B cell (primary cell): ENCODE measurements at regions of chr5 and their contacts with region 1.

Region 1: GRCh38 chr5:176660860-176661641 is 13.8 kb downstream of the TSPAN17 start:
- DNase-seq: peak; percentile 89
- ATAC-seq: peak; percentile 76
- H3K4me3 ChIP-seq: no peak overlapping the region
- H3K4me3 Mint-ChIP-seq: no peak overlapping the region
- H3K27ac ChIP-seq: no peak overlapping the region
- H3K27ac Mint-ChIP-seq: peak overlapping the region; percentile 67
- H3K4me1 ChIP-seq: peaks cover 25 to 30% of the 10 kb centered on the region in 2 donors
- H3K4me1 Mint-ChIP-seq: peaks cover 32% of the 10 kb centered on the region
- H3K27me3 ChIP-seq: peaks cover 0 to 16% (median 2%) of the 10 kb centered on the region in 4 experiments
- H3K27me3 Mint-ChIP-seq: peaks cover 23% of the 10 kb centered on the region
- CTCF ChIP-seq: peak; percentile 96

Region 2: DNA sequence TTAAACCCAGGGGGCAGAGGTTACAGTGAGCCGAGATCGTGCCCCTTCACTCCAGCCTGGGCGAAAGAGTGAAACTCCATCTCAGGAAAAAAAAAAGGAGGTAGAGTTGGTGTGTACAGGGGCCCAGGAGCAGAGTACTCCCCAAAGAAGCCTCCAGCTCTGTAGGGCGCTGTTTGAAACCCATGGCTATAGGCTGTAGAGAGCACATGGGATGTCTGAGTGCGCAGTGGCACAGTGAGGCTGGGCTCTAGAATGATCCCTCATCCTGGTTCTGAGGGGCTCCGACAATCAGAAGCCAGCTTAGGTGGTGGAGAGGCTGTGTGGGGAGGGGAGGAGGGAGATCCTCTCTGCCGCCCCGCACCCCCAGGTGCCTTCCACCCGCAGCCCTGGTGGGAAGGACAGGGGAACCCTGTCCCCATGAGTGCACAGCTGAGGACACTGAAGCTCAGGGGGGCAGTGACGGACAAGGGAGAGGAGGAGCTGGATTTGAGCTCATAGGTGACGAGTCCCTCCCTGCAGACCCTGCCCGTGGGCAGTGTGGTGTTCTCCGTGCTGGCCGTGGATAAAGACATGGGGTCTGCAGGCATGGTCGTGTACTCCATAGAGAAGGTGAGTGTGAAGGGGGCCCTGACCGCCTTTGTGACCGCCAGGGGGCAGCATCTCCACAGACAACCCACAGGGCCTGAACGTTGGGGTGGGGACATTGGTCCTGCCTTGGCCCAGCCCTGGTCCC is 87.3 kb before region 1 on chr5:
- CTCF ChIA-PET with region 1: interaction called, 21 read pairs
- POLR2A ChIA-PET with region 1: no interaction called
- intact Hi-C with region 1: loop called (anchors 1 kb)
- DNase-seq: peak; percentile 82
- ATAC-seq: peak; percentile 79
- H3K4me3 ChIP-seq: no peak overlapping the region
- H3K4me3 Mint-ChIP-seq: no peak overlapping the region
- H3K27ac ChIP-seq: no peak overlapping the region
- H3K27ac Mint-ChIP-seq: no peak overlapping the region
- H3K4me1 ChIP-seq: peaks cover 0 to 11% of the 10 kb centered on the region in 2 donors
- H3K4me1 Mint-ChIP-seq: peaks cover 5% of the 10 kb centered on the region
- H3K27me3 ChIP-seq: peaks cover 0 to 7% (median 2%) of the 10 kb centered on the region in 4 experiments
- H3K27me3 Mint-ChIP-seq: peaks cover 12% of the 10 kb centered on the region
- CTCF ChIP-seq: peak; percentile 92

Region 3: GRCh38 chr5:176596689-176597416 is 64.2 kb before region 1 on chr5:
- CTCF ChIA-PET with region 1: interaction called, 10 read pairs
- POLR2A ChIA-PET with region 1: no interaction called
- intact Hi-C with region 1: no loop called
- DNase-seq: peak; percentile 77
- ATAC-seq: peak; percentile 85
- H3K4me3 ChIP-seq: peak overlapping the region in 3 of 5 experiments; percentile 20 to 42 (median 39)
- H3K4me3 Mint-ChIP-seq: peak overlapping the region; percentile 75
- H3K27ac ChIP-seq: no peak overlapping the region
- H3K27ac Mint-ChIP-seq: no peak overlapping the region
- H3K4me1 ChIP-seq: peaks cover 0 to 10% of the 10 kb centered on the region in 2 donors
- H3K4me1 Mint-ChIP-seq: peaks cover 7% of the 10 kb centered on the region
- H3K27me3 ChIP-seq: peaks cover 0 to 14% (median 3%) of the 10 kb centered on the region in 4 experiments
- H3K27me3 Mint-ChIP-seq: no peaks in the 10 kb centered on the region
- CTCF ChIP-seq: peak; percentile 18

Region 4: GRCh38 chr5:176629853-176630712 is 31.0 kb before region 1 on chr5 and contains the starts of genes EIF4E1B and SNCB:
- CTCF ChIA-PET with region 1: interaction called, 21 read pairs
- POLR2A ChIA-PET with region 1: no interaction called
- intact Hi-C with region 1: no loop called
- DNase-seq: peak; percentile 80
- ATAC-seq: peak; percentile 93
- H3K4me3 ChIP-seq: peak within 1 kb of the TSS; percentile 28 to 69 (median 51)
- H3K4me3 Mint-ChIP-seq: peak within 1 kb of the TSS; percentile 86
- H3K27ac ChIP-seq: no peak within 1 kb of the TSS
- H3K27ac Mint-ChIP-seq: peak within 1 kb of the TSS; percentile 16
- H3K4me1 ChIP-seq: peaks cover 55 to 65% of the 10 kb centered on the region in 2 donors
- H3K4me1 Mint-ChIP-seq: peaks cover 61% of the 10 kb centered on the region
- H3K27me3 ChIP-seq: peaks cover 0 to 39% (median 21%) of the 10 kb centered on the region in 4 experiments
- H3K27me3 Mint-ChIP-seq: peaks cover 34% of the 10 kb centered on the region
- CTCF ChIP-seq: no peak
- total RNA-seq, gene EIF4E1B: not detected in 2 replicates
- total RNA-seq, gene SNCB: not detected in 2 replicates

Region 5: DNA sequence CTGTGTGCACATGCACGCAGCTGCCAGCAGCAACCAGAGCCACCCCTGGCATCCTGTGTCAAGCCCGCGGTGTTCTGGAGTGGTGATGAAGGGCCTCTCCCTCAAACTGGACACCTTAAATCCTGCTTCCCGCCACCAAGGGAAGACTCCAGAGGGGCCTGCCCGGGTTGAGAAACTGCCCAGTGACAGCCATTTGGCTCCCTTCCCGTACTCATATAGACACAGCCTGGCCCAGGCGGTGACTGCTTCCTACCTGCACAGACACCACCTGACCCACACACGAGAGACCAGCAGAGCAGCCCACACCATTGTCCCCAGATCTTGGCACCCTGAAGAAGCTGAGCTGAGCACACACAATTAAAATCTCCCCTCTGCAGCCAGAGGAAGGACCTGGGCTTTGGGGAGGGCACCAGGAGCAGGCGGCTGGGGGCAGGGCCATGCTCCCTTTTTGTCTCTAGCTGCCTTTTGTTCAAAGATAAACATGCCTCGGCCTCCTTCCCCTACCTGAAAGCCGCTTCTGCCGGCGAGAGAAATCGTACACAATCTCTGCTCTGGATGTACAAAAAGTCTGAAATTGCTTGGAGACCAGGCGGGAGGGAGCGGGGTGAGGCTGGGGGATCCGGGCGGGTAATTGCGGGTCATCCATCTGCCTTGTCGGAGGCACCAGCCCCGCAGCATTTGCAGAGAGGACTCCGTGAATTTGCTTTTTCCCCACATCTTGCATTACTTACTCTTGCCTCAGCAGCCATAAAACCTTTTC is 64.7 kb after region 1 on chr5:
- CTCF ChIA-PET with region 1: no interaction called
- POLR2A ChIA-PET with region 1: no interaction called
- intact Hi-C with region 1: no loop called
- DNase-seq: no peak
- ATAC-seq: no peak
- H3K4me3 ChIP-seq: no peak overlapping the region
- H3K4me3 Mint-ChIP-seq: no peak overlapping the region
- H3K27ac ChIP-seq: no peak overlapping the region
- H3K27ac Mint-ChIP-seq: no peak overlapping the region
- H3K4me1 ChIP-seq: no peaks in the 10 kb centered on the region
- H3K4me1 Mint-ChIP-seq: no peaks in the 10 kb centered on the region
- H3K27me3 ChIP-seq: peaks cover 0 to 32% (median 6%) of the 10 kb centered on the region in 4 experiments
- H3K27me3 Mint-ChIP-seq: peaks cover 53% of the 10 kb centered on the region
- CTCF ChIP-seq: no peak

Region 6: GRCh38 chr5:176744584-176744965 is 83.5 kb after region 1 on chr5:
- CTCF ChIA-PET with region 1: no interaction called
- POLR2A ChIA-PET with region 1: no interaction called
- intact Hi-C with region 1: no loop called
- DNase-seq: no peak
- ATAC-seq: no peak
- H3K4me3 ChIP-seq: no peak overlapping the region
- H3K4me3 Mint-ChIP-seq: no peak overlapping the region
- H3K27ac ChIP-seq: no peak overlapping the region
- H3K27ac Mint-ChIP-seq: no peak overlapping the region
- H3K4me1 ChIP-seq: peaks cover 27% of the 10 kb centered on the region in 2 donors
- H3K4me1 Mint-ChIP-seq: peaks cover 19% of the 10 kb centered on the region
- H3K27me3 ChIP-seq: peaks cover 0 to 84% (median 34%) of the 10 kb centered on the region in 4 experiments
- H3K27me3 Mint-ChIP-seq: peaks cover 67% of the 10 kb centered on the region
- CTCF ChIP-seq: no peak

Region 7: GRCh38 chr5:176959051-176959450 is 298.0 kb after region 1 on chr5:
- CTCF ChIA-PET with region 1: interaction called, 11 read pairs
- POLR2A ChIA-PET with region 1: no interaction called
- intact Hi-C with region 1: loop called (anchors 2 kb)
- DNase-seq: peak; percentile 55
- ATAC-seq: peak; percentile 28
- H3K4me3 ChIP-seq: no peak overlapping the region
- H3K4me3 Mint-ChIP-seq: no peak overlapping the region
- H3K27ac ChIP-seq: no peak overlapping the region
- H3K27ac Mint-ChIP-seq: no peak overlapping the region
- H3K4me1 ChIP-seq: no peaks in the 10 kb centered on the region
- H3K4me1 Mint-ChIP-seq: peaks cover 5% of the 10 kb centered on the region
- H3K27me3 ChIP-seq: no peaks in the 10 kb centered on the region
- H3K27me3 Mint-ChIP-seq: no peaks in the 10 kb centered on the region
- CTCF ChIP-seq: peak; percentile 62

Region 8: GRCh38 chr5:177265395-177265794 is 604.3 kb after region 1 on chr5:
- CTCF ChIA-PET with region 1: no interaction called
- POLR2A ChIA-PET with region 1: no interaction called
- intact Hi-C with region 1: no loop called
- DNase-seq: no peak
- ATAC-seq: no peak
- H3K4me3 ChIP-seq: no peak overlapping the region
- H3K4me3 Mint-ChIP-seq: no peak overlapping the region
- H3K27ac ChIP-seq: no peak overlapping the region
- H3K27ac Mint-ChIP-seq: no peak overlapping the region
- H3K4me1 ChIP-seq: no peaks in the 10 kb centered on the region
- H3K4me1 Mint-ChIP-seq: no peaks in the 10 kb centered on the region
- H3K27me3 ChIP-seq: no peaks in the 10 kb centered on the region
- H3K27me3 Mint-ChIP-seq: no peaks in the 10 kb centered on the region
- CTCF ChIP-seq: no peak